ENCODE measurements at regions of chr17 and their contacts with region 1.

Region 1: GRCh38 chr17:2511462-2512369 is at the start of gene METTL16:
- DNase-seq: peak; percentile 99
- H3K4me3 Mint-ChIP-seq: no peak within 1 kb of the TSS
- H3K27ac Mint-ChIP-seq: no peak within 1 kb of the TSS
- H3K4me1 Mint-ChIP-seq: peaks cover 11% of the 10 kb centered on the region
- H3K27me3 Mint-ChIP-seq: no peaks in the 10 kb centered on the region
- total RNA-seq, gene METTL16: 44.0 to 44.6 TPM

Region 2: DNA sequence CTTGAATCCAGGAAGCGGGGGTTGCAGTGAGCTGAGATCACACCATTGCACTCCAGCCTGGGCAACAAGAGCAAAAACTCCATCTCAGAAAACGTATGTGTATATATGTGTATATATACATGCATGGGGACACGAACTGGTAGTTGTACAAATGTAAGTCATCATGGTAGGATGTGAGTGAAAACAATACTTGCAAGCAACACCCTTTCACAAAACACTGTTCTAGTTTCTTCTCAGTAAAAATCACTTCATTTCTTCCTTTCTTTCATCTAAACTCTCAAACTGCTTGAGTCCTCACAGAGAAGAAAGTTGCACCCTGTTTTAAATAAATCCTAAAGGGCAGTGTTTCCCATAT is 51.8 kb before region 1 on chr17:
- CTCF ChIA-PET with region 1: no interaction called
- POLR2A ChIA-PET with region 1: interaction called, 3 read pairs
- intact Hi-C with region 1: loop called (anchors 2 kb)
- DNase-seq: peak; percentile 27
- H3K4me3 Mint-ChIP-seq: no peak overlapping the region
- H3K27ac Mint-ChIP-seq: peak overlapping the region; percentile 81
- H3K4me1 Mint-ChIP-seq: peaks cover 31% of the 10 kb centered on the region
- H3K27me3 Mint-ChIP-seq: no peaks in the 10 kb centered on the region

Region 3: GRCh38 chr17:2592971-2593820 is 81.5 kb after region 1 on chr17 and contains the start of gene PAFAH1B1:
- CTCF ChIA-PET with region 1: interaction called, 3 read pairs
- POLR2A ChIA-PET with region 1: interaction called, 18 read pairs
- intact Hi-C with region 1: loop called (anchors 2 kb)
- DNase-seq: peak; percentile 96
- H3K4me3 Mint-ChIP-seq: peak within 1 kb of the TSS; percentile 91
- H3K27ac Mint-ChIP-seq: peak within 1 kb of the TSS; percentile 83
- H3K4me1 Mint-ChIP-seq: peaks cover 27% of the 10 kb centered on the region
- H3K27me3 Mint-ChIP-seq: no peaks in the 10 kb centered on the region
- total RNA-seq, gene PAFAH1B1: 170 to 173 TPM

Region 4: DNA sequence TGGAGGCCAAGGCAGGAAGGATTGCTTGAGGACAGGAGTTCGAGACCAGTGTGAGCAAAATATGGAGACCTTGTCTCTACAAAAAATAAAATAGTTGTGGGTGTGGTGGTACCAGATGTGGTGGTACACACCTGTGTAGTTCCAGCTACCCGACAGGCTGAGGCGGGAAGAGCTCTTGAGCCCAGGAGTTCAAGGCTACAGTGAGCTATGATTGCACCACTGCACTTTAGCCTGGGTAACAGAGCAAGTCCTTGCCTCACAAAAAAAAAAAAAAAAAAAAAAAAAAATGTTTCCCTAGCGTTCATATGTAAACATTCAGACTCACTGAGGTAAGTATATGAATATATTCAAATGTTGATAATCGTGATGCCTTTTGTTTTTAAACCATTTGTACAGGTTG is 160.3 kb after region 1 on chr17:
- CTCF ChIA-PET with region 1: interaction called, 5 read pairs
- POLR2A ChIA-PET with region 1: no interaction called
- intact Hi-C with region 1: loop called (anchors 1 kb)
- DNase-seq: no peak
- H3K4me3 Mint-ChIP-seq: no peak overlapping the region
- H3K27ac Mint-ChIP-seq: no peak overlapping the region
- H3K4me1 Mint-ChIP-seq: peaks cover 7% of the 10 kb centered on the region
- H3K27me3 Mint-ChIP-seq: no peaks in the 10 kb centered on the region

Measured in activated CD4-positive, alpha-beta memory T cell treated with anti-CD3 and anti-CD28 coated beads for 36 hours (primary cell).